ENCODE measurements at regions of chr12 and their contacts with region 1.

Region 1: DNA sequence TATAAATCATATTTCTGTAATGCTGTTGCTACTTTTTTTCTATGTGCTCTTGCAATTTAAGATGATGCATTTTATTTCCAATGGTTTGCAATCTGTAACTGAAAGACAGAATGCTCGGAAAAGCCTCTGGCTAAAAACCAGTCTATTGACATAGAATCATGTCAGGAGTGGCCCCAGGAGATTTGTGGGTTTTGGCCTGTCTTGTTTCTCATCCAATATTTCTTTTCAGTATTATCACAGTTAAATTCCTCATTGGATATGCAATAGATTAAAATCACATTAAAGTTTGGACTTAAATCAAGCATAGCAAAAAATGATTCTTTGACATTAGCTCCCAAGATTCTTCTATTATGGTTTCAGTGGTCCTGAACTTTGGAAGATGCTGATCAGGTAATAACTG is 19.1 kb upstream of the SLC38A2 start:
- DNase-seq: no peak
- ATAC-seq: no peak
- H3K4me3 ChIP-seq: no peak overlapping the region; a peak in 1 of 6 replicates
- H3K27ac ChIP-seq: peak overlapping the region; percentile 64
- H3K4me1 ChIP-seq: peaks cover 71% of the 10 kb centered on the region
- H3K27me3 ChIP-seq: no peaks in the 10 kb centered on the region
- CTCF ChIP-seq: no peak
- EP300 ChIP-seq: no peak
- POLR2A ChIP-seq: no peak
- RAD21 ChIP-seq: no peak

Region 2: DNA sequence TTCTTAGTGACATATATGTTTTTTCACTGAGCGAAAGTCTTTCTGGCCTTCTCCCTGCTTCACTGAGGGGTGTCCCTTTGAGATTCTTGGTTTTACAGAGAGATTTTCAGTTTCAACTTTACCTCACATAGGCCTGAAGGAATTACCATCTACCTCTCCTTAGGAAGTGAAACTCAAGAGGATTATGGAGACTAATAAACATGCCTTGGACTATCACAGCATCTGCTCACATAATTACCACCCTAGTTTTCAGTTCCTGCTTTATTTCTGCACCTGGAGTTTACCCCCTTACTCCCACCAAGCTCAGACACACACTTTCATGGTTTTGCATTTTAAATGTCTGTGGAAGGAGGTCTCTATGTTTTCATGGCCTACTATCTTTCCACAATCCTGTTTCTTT is 282.9 kb before region 1 on chr12:
- CTCF ChIA-PET with region 1: no interaction called
- POLR2A ChIA-PET with region 1: no interaction called
- in situ Hi-C with region 1: no loop called
- intact Hi-C with region 1: no loop called
- DNase-seq: no peak
- ATAC-seq: no peak
- H3K4me3 ChIP-seq: no peak overlapping the region
- H3K27ac ChIP-seq: no peak overlapping the region
- H3K4me1 ChIP-seq: peaks cover 18% of the 10 kb centered on the region
- H3K27me3 ChIP-seq: no peaks in the 10 kb centered on the region
- CTCF ChIP-seq: no peak
- EP300 ChIP-seq: no peak
- POLR2A ChIP-seq: no peak
- RAD21 ChIP-seq: no peak

Region 3: DNA sequence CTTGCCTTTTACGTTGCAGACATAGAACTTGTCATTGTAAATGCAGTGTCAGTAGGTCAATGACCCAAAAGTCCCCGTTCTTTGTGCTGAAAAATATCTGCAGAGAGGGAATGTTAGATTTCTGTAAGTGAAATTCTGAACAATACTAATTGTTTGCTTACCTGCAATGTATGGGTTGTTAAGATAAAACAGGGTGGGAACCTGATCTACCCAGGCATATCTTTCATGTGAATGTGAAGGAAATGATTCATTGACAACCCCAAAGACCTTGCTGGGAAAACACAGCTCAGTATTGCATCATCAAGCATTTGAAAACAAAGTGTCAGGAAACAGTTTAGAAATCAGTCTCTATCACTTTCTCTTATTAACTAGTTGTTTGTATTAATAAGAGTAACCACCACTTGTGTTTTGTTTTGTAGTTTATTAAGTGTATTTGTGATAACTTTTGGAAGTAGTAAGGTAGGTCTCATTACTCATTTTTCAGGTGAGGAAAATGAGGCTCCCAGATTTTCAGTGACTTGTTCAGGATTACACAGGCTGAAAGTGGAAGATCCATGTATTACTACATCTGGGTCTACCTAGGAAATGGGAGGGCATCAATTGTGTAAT is 38.8 kb after region 1 on chr12:
- CTCF ChIA-PET with region 1: no interaction called
- POLR2A ChIA-PET with region 1: interaction called, 4 read pairs
- in situ Hi-C with region 1: loop called (anchors 5 kb)
- intact Hi-C with region 1: loop called (anchors 1 kb)
- DNase-seq: peak; percentile 95
- ATAC-seq: peak; percentile 90
- H3K4me3 ChIP-seq: peak overlapping the region in 1 of 3 experiments; percentile 2; a peak in 2 of 6 replicates
- H3K27ac ChIP-seq: peak overlapping the region; percentile 58
- H3K4me1 ChIP-seq: peaks cover 37% of the 10 kb centered on the region
- H3K27me3 ChIP-seq: no peaks in the 10 kb centered on the region
- CTCF ChIP-seq: no peak
- EP300 ChIP-seq: peak in 1 of 2 experiments; percentile 92; a peak in 2 of 4 replicates
- POLR2A ChIP-seq: no peak
- RAD21 ChIP-seq: no peak

Measured in HepG2 (cell line).